ENCODE measurements at regions of chr6 and their contacts with region 1.

Region 1: GRCh38 chr6:43228951-43229802 is at the start of gene DNPH1:
- DNase-seq: peak; percentile 62 to 90 (median 79)
- ATAC-seq: peak; percentile 62
- H3K4me3 ChIP-seq: peak within 1 kb of the TSS; percentile 48 to 69
- H3K4me3 Mint-ChIP-seq: peak within 1 kb of the TSS; percentile 87
- H3K27ac ChIP-seq: peak within 1 kb of the TSS; percentile 49 to 60
- H3K27ac Mint-ChIP-seq: peak within 1 kb of the TSS; percentile 94
- H3K4me1 ChIP-seq: peaks cover 43% of the 10 kb centered on the region
- H3K4me1 Mint-ChIP-seq: peaks cover 40% of the 10 kb centered on the region
- H3K27me3 ChIP-seq: no peaks in the 10 kb centered on the region
- H3K27me3 Mint-ChIP-seq: no peaks in the 10 kb centered on the region
- CTCF ChIP-seq: peak; percentile 92
- total RNA-seq, gene DNPH1: 19.6 to 26.8 TPM

Region 2: DNA sequence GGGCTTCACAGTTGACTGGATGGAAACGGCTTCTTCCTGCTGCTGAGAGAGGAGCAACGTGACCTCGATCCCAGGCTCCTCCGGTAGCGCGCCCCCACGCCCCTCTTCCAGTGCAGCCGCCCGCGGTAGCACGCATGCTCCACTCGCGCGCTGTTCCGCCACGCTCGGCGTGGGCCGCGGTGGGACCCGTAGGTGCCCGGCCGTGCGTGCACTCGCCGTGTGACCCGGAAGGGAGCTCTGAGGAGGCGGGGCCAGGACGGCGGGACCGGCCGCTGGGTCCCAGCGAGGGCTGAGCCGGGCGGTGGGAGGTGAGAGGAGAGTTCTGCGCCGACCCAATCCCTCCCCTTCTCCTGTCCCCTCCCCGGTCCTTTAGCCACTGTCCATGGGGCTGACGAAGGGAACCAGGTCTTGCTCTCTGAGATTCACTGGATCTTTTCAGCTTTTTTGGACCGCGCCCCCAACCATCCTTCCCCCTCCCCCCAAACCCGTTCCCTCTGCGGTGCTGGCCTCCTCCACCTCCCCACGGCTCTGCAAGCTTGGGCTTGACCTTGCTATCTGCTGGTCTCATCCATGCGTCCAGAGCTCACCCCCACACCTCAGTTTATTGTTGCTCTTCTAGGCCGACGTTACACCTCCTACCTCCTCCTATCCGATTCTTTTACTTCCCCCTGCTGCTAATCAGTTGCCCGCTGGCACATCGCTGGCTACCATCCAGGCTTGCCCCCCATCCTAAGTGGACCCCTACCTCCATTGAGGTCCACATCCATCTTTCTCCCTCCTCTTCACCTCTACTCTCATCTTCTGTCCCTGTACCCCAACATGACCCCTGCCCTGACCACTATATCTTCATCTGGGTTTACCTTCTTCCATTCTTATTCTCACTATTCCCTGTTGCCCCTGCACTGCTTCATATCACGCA is 47.0 kb before region 1 on chr6 and contains the start of gene CUL9:
- CTCF ChIA-PET with region 1: interaction called, 5 read pairs
- POLR2A ChIA-PET with region 1: interaction called, 4 read pairs
- intact Hi-C with region 1: loop called in 1 of 2 experiments (anchors 2 kb)
- DNase-seq: peak; percentile 48 to 91 (median 80)
- ATAC-seq: peak; percentile 91
- H3K4me3 ChIP-seq: peak within 1 kb of the TSS; percentile 62 to 69
- H3K4me3 Mint-ChIP-seq: peak within 1 kb of the TSS; percentile 93
- H3K27ac ChIP-seq: peak within 1 kb of the TSS; percentile 65
- H3K27ac Mint-ChIP-seq: peak within 1 kb of the TSS; percentile 95
- H3K4me1 ChIP-seq: peaks cover 51% of the 10 kb centered on the region
- H3K4me1 Mint-ChIP-seq: peaks cover 49% of the 10 kb centered on the region
- H3K27me3 ChIP-seq: no peaks in the 10 kb centered on the region
- H3K27me3 Mint-ChIP-seq: no peaks in the 10 kb centered on the region
- CTCF ChIP-seq: no peak
- total RNA-seq, gene CUL9: 72.0 to 77.2 TPM

Region 3: DNA sequence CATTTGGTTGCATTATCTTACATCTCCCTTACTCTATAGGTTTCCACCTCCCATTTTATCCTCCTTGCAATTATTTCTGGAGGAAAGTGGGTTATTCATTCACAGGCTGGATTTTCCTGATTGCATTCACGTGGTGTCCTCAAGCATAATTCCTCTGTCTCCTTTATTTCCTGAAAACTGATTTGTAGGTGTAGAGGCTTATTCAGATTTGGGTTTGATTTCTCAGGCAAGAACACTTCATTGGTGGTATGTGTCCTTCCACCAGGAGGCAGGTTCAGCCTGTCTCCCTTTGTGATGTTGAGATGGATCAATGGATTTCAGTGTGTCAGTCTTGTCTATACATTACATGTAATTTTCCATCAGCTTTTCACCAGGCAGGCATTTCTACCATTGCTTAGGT is 17.2 kb before region 1 on chr6:
- CTCF ChIA-PET with region 1: interaction called, 16 read pairs
- POLR2A ChIA-PET with region 1: interaction called, 5 read pairs
- intact Hi-C with region 1: no loop called
- DNase-seq: peak in 1 of 9 experiments; percentile 22
- ATAC-seq: no peak
- H3K4me3 ChIP-seq: no peak overlapping the region
- H3K4me3 Mint-ChIP-seq: no peak overlapping the region
- H3K27ac ChIP-seq: no peak overlapping the region
- H3K27ac Mint-ChIP-seq: no peak overlapping the region
- H3K4me1 ChIP-seq: no peaks in the 10 kb centered on the region
- H3K4me1 Mint-ChIP-seq: no peaks in the 10 kb centered on the region
- H3K27me3 ChIP-seq: no peaks in the 10 kb centered on the region
- H3K27me3 Mint-ChIP-seq: no peaks in the 10 kb centered on the region
- CTCF ChIP-seq: no peak

Region 4: DNA sequence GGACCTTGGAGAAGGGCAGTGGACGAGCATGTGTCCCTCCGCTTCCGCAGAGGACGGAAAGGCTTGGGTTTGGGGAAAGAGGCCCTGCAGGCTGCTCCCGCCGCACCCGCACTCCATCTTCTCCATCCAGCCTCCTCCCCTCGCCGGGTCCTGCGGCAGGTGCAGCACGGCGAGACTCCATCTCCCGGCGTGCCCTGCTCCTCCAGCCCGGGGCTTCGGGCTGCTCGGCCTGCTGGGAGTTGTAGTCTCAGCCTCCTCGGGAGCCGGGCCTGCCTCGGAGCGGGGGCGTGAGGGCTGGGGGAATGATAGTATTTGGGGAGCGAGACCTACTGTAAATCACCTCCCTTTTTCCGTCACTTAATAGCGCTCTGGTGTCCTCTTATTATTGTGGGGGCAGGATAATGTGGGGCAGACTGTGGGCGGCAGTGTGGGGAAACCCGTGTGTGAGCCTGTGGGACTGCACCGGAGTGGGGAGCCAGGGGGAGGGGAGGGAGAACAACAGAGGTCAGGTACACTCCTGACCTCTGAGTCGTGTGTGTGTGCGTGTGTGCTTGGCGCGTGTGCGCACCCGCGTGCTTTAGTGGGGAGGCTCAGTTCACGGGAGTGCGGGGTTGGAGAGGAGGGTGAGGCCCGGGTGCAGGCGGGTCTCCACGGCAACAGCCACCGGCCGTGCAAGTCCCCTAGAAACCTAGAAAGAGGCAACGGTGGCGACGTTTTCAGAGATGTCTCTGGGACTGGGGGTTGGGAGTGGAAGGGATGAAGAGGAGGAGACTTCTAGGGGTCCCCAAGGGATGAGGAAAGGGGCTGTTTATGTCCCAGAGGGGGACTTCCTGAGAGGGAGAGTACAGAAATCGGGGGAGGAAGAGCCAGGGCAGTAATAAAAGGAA is 18.2 kb after region 1 on chr6:
- CTCF ChIA-PET with region 1: interaction called, 11 read pairs
- POLR2A ChIA-PET with region 1: interaction called, 8 read pairs
- intact Hi-C with region 1: loop called (anchors 1 kb)
- DNase-seq: peak; percentile 59 to 87 (median 78)
- ATAC-seq: peak; percentile 95
- H3K4me3 ChIP-seq: peak overlapping the region; percentile 65 to 71
- H3K4me3 Mint-ChIP-seq: no peak overlapping the region
- H3K27ac ChIP-seq: peak overlapping the region; percentile 19 to 40
- H3K27ac Mint-ChIP-seq: peak overlapping the region; percentile 88
- H3K4me1 ChIP-seq: peaks cover 11% of the 10 kb centered on the region
- H3K4me1 Mint-ChIP-seq: peaks cover 15% of the 10 kb centered on the region
- H3K27me3 ChIP-seq: peaks cover 11 to 22% of the 10 kb centered on the region in 2 experiments
- H3K27me3 Mint-ChIP-seq: peaks cover 16% of the 10 kb centered on the region
- CTCF ChIP-seq: no peak

Region 5: GRCh38 chr6:43263314-43264178 is 34.4 kb after region 1 on chr6:
- CTCF ChIA-PET with region 1: interaction called, 11 read pairs
- POLR2A ChIA-PET with region 1: no interaction called
- intact Hi-C with region 1: no loop called
- DNase-seq: peak; percentile 57 to 84 (median 75)
- ATAC-seq: peak; percentile 95
- H3K4me3 ChIP-seq: no peak overlapping the region
- H3K4me3 Mint-ChIP-seq: no peak overlapping the region
- H3K27ac ChIP-seq: no peak overlapping the region
- H3K27ac Mint-ChIP-seq: no peak overlapping the region
- H3K4me1 ChIP-seq: no peaks in the 10 kb centered on the region
- H3K4me1 Mint-ChIP-seq: no peaks in the 10 kb centered on the region
- H3K27me3 ChIP-seq: no peaks in the 10 kb centered on the region
- H3K27me3 Mint-ChIP-seq: peaks cover 3% of the 10 kb centered on the region
- CTCF ChIP-seq: peak; percentile 57

Region 6: DNA sequence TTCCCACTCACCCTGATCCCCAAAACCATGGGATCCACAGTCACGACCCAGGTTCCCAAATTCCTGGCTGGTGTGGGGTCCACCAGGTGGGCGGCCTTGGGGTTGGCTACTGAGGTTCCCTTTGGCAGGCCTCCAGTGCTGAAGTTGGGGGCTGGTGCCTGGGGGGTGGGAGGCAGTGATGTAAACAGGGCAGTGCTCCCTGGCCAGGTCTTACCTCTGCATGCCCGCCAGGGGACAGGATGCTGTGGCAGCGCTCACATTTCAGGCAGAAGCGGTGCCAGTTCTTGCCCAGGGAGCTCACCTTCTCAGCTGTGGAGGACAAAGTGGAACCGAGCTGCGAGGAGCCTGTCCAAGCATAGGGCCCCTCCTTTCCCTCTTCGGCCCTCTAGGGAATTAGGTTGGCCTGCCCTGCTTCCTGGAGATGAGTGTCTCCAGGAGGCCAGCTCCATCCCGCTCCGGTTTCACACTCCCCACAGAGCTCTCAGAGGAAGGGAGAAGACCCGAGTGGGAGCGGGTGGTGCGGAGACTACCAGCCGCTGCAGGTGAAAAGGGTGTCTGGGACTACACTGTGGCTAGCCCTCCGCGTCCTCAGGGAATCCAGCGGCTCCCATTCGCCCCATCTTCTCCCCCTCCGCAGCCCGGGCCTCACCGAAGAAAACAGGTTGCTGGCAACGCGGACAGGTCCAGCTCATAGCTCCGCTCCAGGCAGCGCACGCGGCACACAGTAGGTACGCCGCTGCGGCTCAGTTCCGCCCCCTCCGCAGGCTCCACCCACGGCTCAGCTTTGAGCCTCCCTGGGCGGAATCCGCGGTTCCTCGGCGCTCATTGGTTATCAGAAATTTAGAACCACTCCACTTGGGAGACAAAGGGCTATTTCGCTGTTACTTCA is 79.2 kb after region 1 on chr6 and contains the start of gene CRIP3:
- CTCF ChIA-PET with region 1: no interaction called
- POLR2A ChIA-PET with region 1: no interaction called
- intact Hi-C with region 1: loop called in 1 of 2 experiments (anchors 1 kb)
- DNase-seq: peak in 8 of 9 experiments; percentile 21 to 68 (median 50)
- ATAC-seq: peak; percentile 86
- H3K4me3 ChIP-seq: peak within 1 kb of the TSS; percentile 36 to 48
- H3K4me3 Mint-ChIP-seq: peak within 1 kb of the TSS; percentile 77
- H3K27ac ChIP-seq: no peak within 1 kb of the TSS
- H3K27ac Mint-ChIP-seq: no peak within 1 kb of the TSS
- H3K4me1 ChIP-seq: peaks cover 12% of the 10 kb centered on the region
- H3K4me1 Mint-ChIP-seq: peaks cover 9% of the 10 kb centered on the region
- H3K27me3 ChIP-seq: no peaks in the 10 kb centered on the region
- H3K27me3 Mint-ChIP-seq: peaks cover 5% of the 10 kb centered on the region
- CTCF ChIP-seq: peak; percentile 41
- total RNA-seq, gene CRIP3: 0.64 to 0.84 TPM

Region 7: DNA sequence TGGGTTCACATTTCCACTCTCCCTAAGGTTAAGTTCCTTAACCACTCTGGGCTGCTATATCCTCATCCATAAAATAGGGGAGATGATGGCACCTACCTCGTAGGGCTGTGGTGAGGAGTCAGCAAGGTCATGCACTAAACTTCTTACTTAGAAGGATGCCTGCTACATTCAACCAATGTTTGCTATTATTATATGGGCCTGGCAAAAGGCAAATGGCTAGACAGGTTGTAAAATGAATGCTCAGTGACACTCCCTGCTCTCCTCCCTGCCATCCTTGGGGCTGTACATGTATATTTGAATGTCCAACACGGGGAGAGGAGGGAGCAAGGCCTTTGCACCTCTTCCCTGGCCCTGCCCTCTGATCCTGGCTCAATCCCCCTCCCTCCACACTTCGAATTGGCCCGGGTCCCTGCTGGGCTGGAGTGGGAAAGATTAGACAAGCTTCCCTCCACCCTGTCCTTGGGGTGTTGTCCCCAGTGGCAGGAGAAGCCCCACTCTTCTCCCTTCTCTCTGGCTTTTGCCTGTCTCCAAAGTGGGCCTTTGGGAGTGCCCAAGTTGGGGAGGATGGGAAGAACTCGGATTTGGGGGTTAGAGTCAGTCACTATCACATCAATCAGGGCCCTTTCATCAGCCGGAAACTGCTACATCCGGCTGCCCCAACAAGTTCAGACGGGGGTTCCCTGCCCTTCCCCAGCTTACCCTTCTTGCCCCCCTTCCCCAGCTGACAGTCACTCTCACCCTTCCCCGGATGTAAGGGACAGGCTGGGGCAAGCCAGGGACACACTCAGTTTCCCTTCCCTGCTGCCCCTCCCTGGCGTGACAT is 504.5 kb after region 1 on chr6:
- CTCF ChIA-PET with region 1: no interaction called
- POLR2A ChIA-PET with region 1: no interaction called
- intact Hi-C with region 1: no loop called
- DNase-seq: peak in 7 of 9 experiments; percentile 24 to 75 (median 34)
- ATAC-seq: peak; percentile 52
- H3K4me3 ChIP-seq: no peak overlapping the region
- H3K4me3 Mint-ChIP-seq: no peak overlapping the region
- H3K27ac ChIP-seq: no peak overlapping the region
- H3K27ac Mint-ChIP-seq: no peak overlapping the region
- H3K4me1 ChIP-seq: peaks cover 18% of the 10 kb centered on the region
- H3K4me1 Mint-ChIP-seq: peaks cover 7% of the 10 kb centered on the region
- H3K27me3 ChIP-seq: no peaks in the 10 kb centered on the region
- H3K27me3 Mint-ChIP-seq: no peaks in the 10 kb centered on the region
- CTCF ChIP-seq: no peak

Region 8: GRCh38 chr6:45148711-45149341 is 1919.6 kb after region 1 on chr6:
- CTCF ChIA-PET with region 1: no interaction called
- POLR2A ChIA-PET with region 1: no interaction called
- intact Hi-C with region 1: no loop called
- DNase-seq: no peak
- ATAC-seq: no peak
- H3K4me3 ChIP-seq: no peak overlapping the region
- H3K4me3 Mint-ChIP-seq: no peak overlapping the region
- H3K27ac ChIP-seq: no peak overlapping the region
- H3K27ac Mint-ChIP-seq: no peak overlapping the region
- H3K4me1 ChIP-seq: no peaks in the 10 kb centered on the region
- H3K4me1 Mint-ChIP-seq: peaks cover 2% of the 10 kb centered on the region
- H3K27me3 ChIP-seq: no peaks in the 10 kb centered on the region
- H3K27me3 Mint-ChIP-seq: no peaks in the 10 kb centered on the region
- CTCF ChIP-seq: no peak

Measured in CD8-positive, alpha-beta T cell (primary cell).